Activated T-helper 2 cell treated with anti-CD3 and anti-CD28 coated beads, Interferon-gamma antibody, Interleukin-2, Interleukin-4, amounts not matched to agents 10 μg/mL and 5 μg/mL and 100 μg/mL, durations not matched to agents 14 hours and 24 hours and 36 hours (primary cell): ENCODE measurements at regions of chr1 and their contacts with region 1.

Region 1: GRCh38 chr1:230867903-230868735 is at the start of gene C1orf198:
- DNase-seq: peak; percentile 67
- H3K4me3 Mint-ChIP-seq: peak within 1 kb of the TSS; percentile 82
- H3K27ac Mint-ChIP-seq: peak within 1 kb of the TSS; percentile 64
- H3K4me1 Mint-ChIP-seq: peaks cover 19% of the 10 kb centered on the region
- H3K27me3 Mint-ChIP-seq: peaks cover 31% of the 10 kb centered on the region
- total RNA-seq, gene C1orf198: 8.9 and 9.1 TPM in 2 replicates

Region 2: GRCh38 chr1:229620876-229621275 is 1247.2 kb before region 1 on chr1:
- intact Hi-C with region 1: no loop called
- DNase-seq: no peak
- H3K4me3 Mint-ChIP-seq: no peak overlapping the region
- H3K27ac Mint-ChIP-seq: no peak overlapping the region
- H3K4me1 Mint-ChIP-seq: peaks cover 39% of the 10 kb centered on the region
- H3K27me3 Mint-ChIP-seq: no peaks in the 10 kb centered on the region

Region 3: GRCh38 chr1:230937371-230937770 is 69.3 kb after region 1 on chr1:
- intact Hi-C with region 1: no loop called
- DNase-seq: no peak
- H3K4me3 Mint-ChIP-seq: no peak overlapping the region
- H3K27ac Mint-ChIP-seq: peak overlapping the region; percentile 7
- H3K4me1 Mint-ChIP-seq: peaks cover 22% of the 10 kb centered on the region
- H3K27me3 Mint-ChIP-seq: no peaks in the 10 kb centered on the region

Region 4: GRCh38 chr1:231040019-231040799 is 172.1 kb after region 1 on chr1 and contains the start of gene FAM89A:
- intact Hi-C with region 1: loop called (anchors 5 kb)
- DNase-seq: peak; percentile 59
- H3K4me3 Mint-ChIP-seq: peak within 1 kb of the TSS; percentile 79
- H3K27ac Mint-ChIP-seq: no peak within 1 kb of the TSS
- H3K4me1 Mint-ChIP-seq: peaks cover 29% of the 10 kb centered on the region
- H3K27me3 Mint-ChIP-seq: peaks cover 32% of the 10 kb centered on the region
- total RNA-seq, gene FAM89A: 16.1 and 18.7 TPM in 2 replicates